Sigmoid colon (tissue), 7 donors: ENCODE measurements at regions of chr1 and their contacts with region 1.

Region 1: GRCh38 chr1:87968197-87968955 is 639.7 kb downstream of the LMO4 start:
- DNase-seq: peak; percentile 76
- H3K4me3 ChIP-seq: no peak overlapping the region
- H3K27ac ChIP-seq: peak overlapping the region in 3 of 4 donors; percentile 37 to 68 (median 49)
- H3K4me1 ChIP-seq: peaks cover 0 to 16% (median 13%) of the 10 kb centered on the region in 4 donors
- H3K27me3 ChIP-seq: no peaks in the 10 kb centered on the region
- CTCF ChIP-seq: no peak
- EP300 ChIP-seq: no peak
- POLR2A ChIP-seq: no peak

Region 2: GRCh38 chr1:87720561-87720960 is 247.8 kb before region 1 on chr1:
- intact Hi-C with region 1: no loop called
- DNase-seq: no peak
- H3K4me3 ChIP-seq: no peak overlapping the region
- H3K27ac ChIP-seq: no peak overlapping the region
- H3K4me1 ChIP-seq: peaks cover 0 to 12% (median 9%) of the 10 kb centered on the region in 4 donors
- H3K27me3 ChIP-seq: no peaks in the 10 kb centered on the region
- CTCF ChIP-seq: no peak
- EP300 ChIP-seq: no peak
- POLR2A ChIP-seq: no peak

Region 3: GRCh38 chr1:87979079-87979478 is 10.7 kb after region 1 on chr1:
- intact Hi-C with region 1: loop called (anchors 1 kb)
- DNase-seq: no peak
- H3K4me3 ChIP-seq: no peak overlapping the region
- H3K27ac ChIP-seq: no peak overlapping the region
- H3K4me1 ChIP-seq: no peaks in the 10 kb centered on the region
- H3K27me3 ChIP-seq: no peaks in the 10 kb centered on the region
- CTCF ChIP-seq: no peak
- EP300 ChIP-seq: no peak
- POLR2A ChIP-seq: no peak